ENCODE measurements at regions of chr15 and their contacts with region 1.

Region 1: DNA sequence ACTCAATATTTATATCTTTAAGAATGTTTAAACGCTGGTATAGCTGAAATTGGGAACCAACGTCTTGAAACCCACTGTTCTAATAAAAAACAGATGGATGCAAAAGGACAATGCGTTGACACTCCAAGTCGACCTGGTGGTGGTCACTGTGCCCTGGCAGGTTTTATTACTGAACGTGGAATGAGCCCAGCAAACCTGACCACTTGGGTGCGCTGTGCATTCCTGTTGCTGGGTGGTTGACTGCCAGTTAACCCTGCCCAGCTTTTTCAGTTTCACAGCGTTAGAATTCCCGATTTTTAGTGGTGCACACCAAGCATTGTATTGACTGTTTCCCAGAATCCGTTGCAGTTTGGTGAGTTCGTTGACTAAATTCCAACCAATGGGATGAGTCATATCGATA is 384.4 kb downstream of the OCA2 start:
- DNase-seq: no peak
- ATAC-seq: no peak

Region 2: DNA sequence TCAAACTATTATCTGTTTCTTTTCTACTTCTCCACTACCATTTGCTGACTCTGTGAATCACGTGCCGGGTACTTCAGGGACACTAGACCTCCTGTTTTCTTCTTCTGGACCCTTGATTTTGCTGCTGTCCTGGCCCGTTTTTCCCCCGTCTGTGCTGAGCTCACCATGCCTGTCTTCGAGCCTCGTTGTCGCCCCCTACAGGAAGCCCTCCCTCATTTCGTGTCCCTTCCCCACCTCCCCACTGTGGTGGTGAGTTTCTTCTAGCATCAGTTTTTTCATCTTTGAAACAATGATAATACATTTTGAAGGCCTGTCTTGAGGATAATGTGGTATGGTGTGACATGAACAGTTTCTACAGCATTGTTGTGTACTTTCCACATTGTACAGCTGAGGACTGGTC is 730.9 kb before region 1 on chr15:
- intact Hi-C with region 1: loop called (anchors 10 kb)
- DNase-seq: no peak
- ATAC-seq: no peak

Region 3: GRCh38 chr15:27784107-27784506 is 69.4 kb after region 1 on chr15:
- intact Hi-C with region 1: no loop called
- DNase-seq: no peak
- ATAC-seq: no peak

Measured in left ventricle myocardium superior (tissue), 1 donor.